ENCODE measurements at regions of chr16 and their contacts with region 1.

Region 1: DNA sequence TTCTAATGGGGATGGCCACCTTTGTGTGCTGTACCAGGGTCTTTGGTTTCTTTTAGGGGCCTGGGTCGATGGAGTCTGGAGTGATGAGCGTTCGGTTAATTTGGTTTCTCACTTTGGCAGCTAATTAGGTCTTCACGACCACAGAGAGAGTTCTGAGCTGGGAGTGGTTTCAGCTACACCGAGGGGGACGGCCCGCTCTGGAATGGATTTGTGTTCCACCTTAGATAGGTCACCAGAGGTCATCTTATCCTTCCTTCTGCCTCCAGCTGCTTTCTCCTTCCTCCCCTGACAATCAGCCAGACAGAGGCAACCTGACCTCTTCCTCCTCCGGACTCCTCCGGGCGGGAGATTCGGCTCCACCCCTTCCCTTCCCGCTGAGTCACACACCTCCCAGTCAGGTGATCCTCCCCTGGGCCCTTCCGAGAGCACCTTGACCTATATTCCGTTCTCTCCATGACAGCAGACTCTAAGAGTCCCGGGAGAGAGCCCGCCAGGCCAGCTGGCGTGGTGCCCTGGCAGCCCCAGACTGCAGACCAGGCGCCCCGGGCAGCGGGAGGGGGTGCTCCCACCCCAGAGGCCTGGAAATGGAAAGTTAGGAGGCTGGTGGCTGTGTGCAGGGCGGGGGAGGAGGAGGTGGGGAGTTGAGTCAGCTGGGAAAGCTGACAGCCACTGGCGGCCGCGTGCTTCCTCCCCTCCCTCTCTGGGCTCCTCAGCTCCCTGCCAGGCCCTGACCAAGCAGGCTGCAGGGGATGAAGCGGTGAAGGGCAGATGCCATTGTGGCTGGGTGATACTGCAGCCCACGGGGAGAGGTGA is 44.7 kb downstream of the CHD9 start:
- DNase-seq: peak; percentile 68
- ATAC-seq: peak; percentile 75
- H3K4me3 ChIP-seq: peak overlapping the region; percentile 79
- H3K27ac ChIP-seq: peak overlapping the region; percentile 96
- H3K4me1 ChIP-seq: peaks cover 25% of the 10 kb centered on the region
- H3K27me3 ChIP-seq: no peaks in the 10 kb centered on the region
- CTCF ChIP-seq: no peak
- EP300 ChIP-seq: peak; percentile 7 to 55; a peak in 1 of 4 replicates
- POLR2A ChIP-seq: peak; percentile 50
- RAD21 ChIP-seq: no peak

Region 2: DNA sequence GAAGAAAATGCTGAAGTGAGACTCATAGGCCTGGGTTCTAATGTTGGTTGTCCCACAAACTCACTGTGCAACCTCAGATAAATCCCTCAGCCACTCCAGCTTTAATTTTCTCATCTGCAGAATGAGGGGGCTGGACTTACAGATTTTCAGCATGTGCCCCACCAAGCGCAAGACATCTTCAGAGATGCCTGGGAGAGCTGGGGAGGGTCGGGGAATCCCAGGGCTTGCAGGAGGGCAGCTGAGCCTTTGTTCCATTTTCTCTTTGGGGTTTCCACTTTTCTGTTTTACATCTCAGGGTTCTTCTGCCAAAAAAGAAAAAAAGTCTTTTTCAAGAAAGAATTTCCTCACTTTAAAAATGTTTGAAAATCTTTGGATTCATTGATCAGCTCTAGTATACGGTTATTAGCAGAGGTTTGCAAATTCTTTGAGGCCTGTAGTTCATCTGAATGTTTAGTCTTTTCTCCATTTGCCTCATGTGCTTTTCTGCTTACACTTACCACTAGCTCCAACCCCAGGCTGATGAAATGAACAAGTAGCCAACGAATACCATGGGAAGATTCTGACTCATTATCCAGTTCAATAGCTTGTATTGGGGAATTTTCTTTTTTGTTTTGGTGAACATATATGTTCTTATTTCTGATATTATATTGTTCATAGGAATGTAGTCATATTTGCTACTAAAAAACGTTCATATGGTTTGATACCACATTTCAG is 11.7 kb after region 1 on chr16:
- CTCF ChIA-PET with region 1: interaction called, 9 read pairs
- POLR2A ChIA-PET with region 1: interaction called, 32 read pairs
- RAD21 ChIA-PET with region 1: interaction called, 41 read pairs
- SMC1A ChIA-PET with region 1: interaction called, 41 read pairs
- in situ Hi-C with region 1: no loop called
- intact Hi-C with region 1: no loop called
- DNase-seq: no peak
- ATAC-seq: peak; percentile 79
- H3K4me3 ChIP-seq: no peak overlapping the region; the same call in 1 of the 2 replicates
- H3K27ac ChIP-seq: peak overlapping the region; percentile 77
- H3K4me1 ChIP-seq: peaks cover 28% of the 10 kb centered on the region
- H3K27me3 ChIP-seq: no peaks in the 10 kb centered on the region
- CTCF ChIP-seq: no peak
- EP300 ChIP-seq: no peak
- POLR2A ChIP-seq: no peak
- RAD21 ChIP-seq: no peak